ENCODE measurements at regions of chr6 and their contacts with region 1.

Region 1: GRCh38 chr6:111709615-111710398 is 104.1 kb upstream of the TRAF3IP2 start:
- DNase-seq: peak; percentile 72
- ATAC-seq: peak; percentile 87
- H3K4me3 Mint-ChIP-seq: no peak overlapping the region
- H3K27ac Mint-ChIP-seq: peak overlapping the region; percentile 10
- H3K4me1 Mint-ChIP-seq: peaks cover 34% of the 10 kb centered on the region
- H3K27me3 Mint-ChIP-seq: no peaks in the 10 kb centered on the region

Region 2: DNA sequence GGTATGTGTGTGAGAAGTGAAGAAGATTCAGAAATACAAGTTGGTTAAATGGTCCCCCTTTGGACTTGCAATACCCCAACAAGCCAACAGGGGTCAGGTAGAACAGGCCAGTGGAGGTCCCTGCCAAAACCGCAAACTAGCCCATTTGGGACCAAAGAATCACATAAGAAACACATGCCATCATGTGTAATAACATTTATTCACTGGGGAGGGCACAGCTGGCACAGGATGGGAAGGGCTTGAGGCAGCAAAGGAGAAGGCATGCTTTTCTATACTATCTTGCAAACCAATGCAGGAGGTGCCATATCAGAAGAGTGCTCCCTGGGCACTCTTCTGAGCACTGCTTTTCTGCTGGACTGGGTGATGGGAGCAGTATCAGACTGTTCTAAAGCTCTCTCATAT is 11.9 kb after region 1 on chr6:
- CTCF ChIA-PET with region 1: interaction called, 26 read pairs
- POLR2A ChIA-PET with region 1: no interaction called
- DNase-seq: peak; percentile 70
- ATAC-seq: peak; percentile 27
- H3K4me3 Mint-ChIP-seq: no peak overlapping the region
- H3K27ac Mint-ChIP-seq: peak overlapping the region; percentile 68
- H3K4me1 Mint-ChIP-seq: peaks cover 54% of the 10 kb centered on the region
- H3K27me3 Mint-ChIP-seq: no peaks in the 10 kb centered on the region

Region 3: DNA sequence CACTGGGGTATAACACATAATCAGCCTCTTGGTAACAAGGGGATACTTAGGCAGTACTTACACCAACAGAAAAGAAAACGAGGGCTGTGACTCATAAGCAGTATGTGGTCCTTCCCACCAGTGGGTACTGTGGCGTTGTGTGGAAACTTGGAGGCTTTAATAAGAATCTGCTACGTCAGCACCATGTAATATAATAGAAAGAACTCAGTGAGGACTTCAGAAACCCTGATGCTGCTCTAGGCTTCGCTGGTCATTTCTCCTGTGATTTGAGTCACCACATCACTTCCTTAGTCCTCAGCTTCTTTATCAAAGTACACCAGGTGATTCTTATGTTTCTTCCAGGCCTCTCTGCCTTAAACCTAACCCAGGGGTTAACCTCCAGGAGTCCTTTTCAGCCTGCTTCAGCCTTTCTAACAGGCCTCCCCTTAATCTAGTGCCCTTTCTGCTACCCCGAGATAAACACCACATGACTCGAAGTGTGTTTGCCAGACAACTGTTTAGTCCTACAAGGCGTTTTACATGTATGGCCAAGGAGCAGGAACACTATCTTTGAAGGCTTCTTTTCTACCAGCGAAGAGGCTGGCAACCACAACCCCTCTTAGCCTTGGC is 94.9 kb after region 1 on chr6:
- CTCF ChIA-PET with region 1: interaction called, 16 read pairs
- POLR2A ChIA-PET with region 1: interaction called, 3 read pairs
- DNase-seq: peak; percentile 89
- ATAC-seq: peak; percentile 78
- H3K4me3 Mint-ChIP-seq: peak overlapping the region; percentile 56
- H3K27ac Mint-ChIP-seq: peak overlapping the region; percentile 99
- H3K4me1 Mint-ChIP-seq: peaks cover 90% of the 10 kb centered on the region
- H3K27me3 Mint-ChIP-seq: no peaks in the 10 kb centered on the region

Region 4: DNA sequence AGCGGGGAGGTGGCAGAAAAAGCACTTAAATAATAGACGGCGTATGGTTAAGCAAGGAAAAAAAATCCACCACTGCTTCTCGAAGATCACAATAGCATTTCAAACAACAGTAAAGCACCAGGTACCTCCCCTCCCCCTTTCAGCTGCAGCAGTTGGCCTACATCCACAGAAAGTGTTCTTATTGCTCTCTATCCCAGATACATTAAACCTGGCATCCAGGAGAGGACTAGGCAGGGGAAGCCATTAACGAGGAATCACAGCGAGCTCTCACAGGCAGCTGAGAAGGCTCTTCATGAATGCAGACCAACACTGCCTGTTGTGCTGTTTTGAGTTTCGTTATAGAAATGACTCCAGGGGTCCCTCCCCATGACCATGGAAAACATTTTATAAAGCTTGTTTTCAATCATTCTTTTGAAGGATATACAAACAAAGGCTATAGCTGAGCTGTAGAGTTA is 151.7 kb after region 1 on chr6:
- CTCF ChIA-PET with region 1: interaction called, 10 read pairs
- POLR2A ChIA-PET with region 1: interaction called, 3 read pairs
- DNase-seq: peak; percentile 19
- ATAC-seq: no peak
- H3K4me3 Mint-ChIP-seq: no peak overlapping the region
- H3K27ac Mint-ChIP-seq: no peak overlapping the region
- H3K4me1 Mint-ChIP-seq: peaks cover 94% of the 10 kb centered on the region
- H3K27me3 Mint-ChIP-seq: no peaks in the 10 kb centered on the region

Region 5: GRCh38 chr6:111997078-111997852 is 287.5 kb after region 1 on chr6:
- CTCF ChIA-PET with region 1: interaction called, 45 read pairs
- POLR2A ChIA-PET with region 1: no interaction called
- DNase-seq: peak; percentile 85
- ATAC-seq: peak; percentile 85
- H3K4me3 Mint-ChIP-seq: peak overlapping the region; percentile 60
- H3K27ac Mint-ChIP-seq: peak overlapping the region; percentile 73
- H3K4me1 Mint-ChIP-seq: peaks cover 42% of the 10 kb centered on the region
- H3K27me3 Mint-ChIP-seq: no peaks in the 10 kb centered on the region

Region 6: DNA sequence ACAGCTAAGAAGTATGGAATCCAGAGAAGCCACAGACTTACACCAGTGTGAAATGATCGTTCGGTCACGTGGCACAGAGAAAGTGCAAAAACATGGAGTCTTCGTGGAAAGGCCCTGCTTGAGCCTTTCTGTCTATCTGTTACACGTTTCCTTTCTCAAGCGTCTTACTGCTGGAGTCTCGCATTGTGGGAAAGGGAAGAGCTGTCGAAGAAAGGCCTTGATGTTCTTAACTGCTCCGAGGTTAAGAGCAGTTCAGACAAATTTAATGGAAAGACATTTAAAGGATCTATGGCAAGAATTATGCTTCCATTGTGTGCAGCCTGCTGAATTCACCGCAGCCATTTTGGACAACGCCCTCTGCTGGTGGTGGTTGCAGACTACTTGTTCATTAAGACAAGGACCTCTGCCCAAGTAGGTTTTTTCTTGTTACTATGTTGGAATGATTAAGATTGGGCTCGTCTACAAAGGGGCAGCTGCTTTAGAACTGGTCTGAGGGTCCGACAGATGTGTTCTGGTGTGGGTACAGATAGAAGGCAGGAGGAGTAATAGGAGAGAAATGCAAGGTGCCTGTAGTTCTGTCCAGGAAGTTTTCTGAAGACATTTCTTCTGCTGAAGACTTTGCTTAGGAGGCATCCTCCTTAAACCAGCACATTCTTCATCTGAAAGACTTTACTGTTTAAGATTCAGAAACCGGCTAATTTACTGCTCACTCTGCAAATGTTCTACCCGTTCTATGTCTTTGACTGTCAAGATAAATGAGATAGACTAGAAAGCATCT is 319.4 kb after region 1 on chr6:
- CTCF ChIA-PET with region 1: interaction called, 12 read pairs
- POLR2A ChIA-PET with region 1: no interaction called
- DNase-seq: peak; percentile 74
- ATAC-seq: no peak
- H3K4me3 Mint-ChIP-seq: no peak overlapping the region
- H3K27ac Mint-ChIP-seq: peak overlapping the region; percentile 78
- H3K4me1 Mint-ChIP-seq: peaks cover 44% of the 10 kb centered on the region
- H3K27me3 Mint-ChIP-seq: no peaks in the 10 kb centered on the region

Measured in activated CD8-positive, alpha-beta T cell treated with anti-CD3 and anti-CD28 coated beads, Interleukin-2, amount 10 ng/mL, durations not matched to agents 7 days and 5 days (primary cell).